Stomach (tissue), 19 donors: ENCODE measurements at regions of chr6 and their contacts with region 1.

Region 1: GRCh38 chr6:32984605-32985389 is 16.4 kb downstream of the BRD2 start:
- DNase-seq: peak; percentile 96 to 98
- H3K4me3 ChIP-seq: no peak overlapping the region
- H3K27ac ChIP-seq: peak overlapping the region; percentile 47 to 76 (median 60)
- H3K4me1 ChIP-seq: peaks cover 33 to 54% (median 50%) of the 10 kb centered on the region in 4 donors
- H3K27me3 ChIP-seq: no peaks in the 10 kb centered on the region
- CTCF ChIP-seq: peak in 5 of 7 experiments; percentile 73 to 95 (median 86)
- EP300 ChIP-seq: no peak
- POLR2A ChIP-seq: no peak

Region 2: GRCh38 chr6:32703347-32703746 is 281.4 kb before region 1 on chr6:
- intact Hi-C with region 1: no loop called
- DNase-seq: no peak
- H3K4me3 ChIP-seq: no peak overlapping the region
- H3K27ac ChIP-seq: no peak overlapping the region
- H3K4me1 ChIP-seq: no peaks in the 10 kb centered on the region
- H3K27me3 ChIP-seq: peaks cover 0 to 38% (median 0%) of the 10 kb centered on the region in 3 donors
- CTCF ChIP-seq: no peak
- EP300 ChIP-seq: no peak
- POLR2A ChIP-seq: no peak

Region 3: GRCh38 chr6:32885698-32886286 is 99.0 kb before region 1 on chr6:
- intact Hi-C with region 1: loop called (anchors 5 kb)
- DNase-seq: peak in 1 of 2 donors; percentile 88
- H3K4me3 ChIP-seq: no peak overlapping the region
- H3K27ac ChIP-seq: no peak overlapping the region
- H3K4me1 ChIP-seq: peaks cover 0 to 12% (median 4%) of the 10 kb centered on the region in 4 donors
- H3K27me3 ChIP-seq: no peaks in the 10 kb centered on the region
- CTCF ChIP-seq: peak in 5 of 7 experiments; percentile 22 to 73 (median 61)
- EP300 ChIP-seq: no peak
- POLR2A ChIP-seq: no peak